Gastrocnemius medialis (tissue), 4 donors: ENCODE measurements at regions of chr19 and their contacts with region 1.

Region 1: GRCh38 chr19:40598121-40598917 is 2.9 kb upstream of the LTBP4 start:
- DNase-seq: peak; percentile 61 to 76
- ATAC-seq: peak; percentile 69 to 82
- H3K4me3 ChIP-seq: no peak overlapping the region
- H3K27ac ChIP-seq: no peak overlapping the region
- H3K4me1 ChIP-seq: peaks cover 24 to 34% of the 10 kb centered on the region in 2 donors
- H3K27me3 ChIP-seq: peaks cover 40 to 54% (median 42%) of the 10 kb centered on the region in 3 donors
- CTCF ChIP-seq: peak; percentile 90 to 99 (median 94)
- POLR2A ChIP-seq: no peak

Region 2: DNA sequence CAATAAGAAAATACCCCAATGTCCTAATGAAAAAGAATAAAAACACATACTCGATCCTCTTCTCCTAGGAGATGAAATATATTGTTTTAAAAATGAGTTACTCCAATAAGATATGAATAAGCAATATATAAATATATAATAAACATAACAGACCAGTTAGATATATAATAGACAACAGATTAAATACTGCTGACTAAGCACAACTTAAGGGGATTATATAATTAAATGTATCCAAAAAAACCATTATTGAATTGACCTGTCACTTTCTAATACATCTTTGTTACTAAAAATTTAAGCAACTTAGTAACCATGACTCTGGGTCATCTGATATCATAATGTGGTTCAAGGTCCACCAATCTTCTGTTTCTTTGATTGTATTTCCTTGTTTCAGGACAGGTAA is 528.3 kb before region 1 on chr19:
- in situ Hi-C with region 1: no loop called
- intact Hi-C with region 1: no loop called
- DNase-seq: no peak
- ATAC-seq: no peak
- H3K4me3 ChIP-seq: no peak overlapping the region
- H3K27ac ChIP-seq: no peak overlapping the region
- H3K4me1 ChIP-seq: no peaks in the 10 kb centered on the region
- H3K27me3 ChIP-seq: no peaks in the 10 kb centered on the region
- CTCF ChIP-seq: no peak
- POLR2A ChIP-seq: no peak

Region 3: DNA sequence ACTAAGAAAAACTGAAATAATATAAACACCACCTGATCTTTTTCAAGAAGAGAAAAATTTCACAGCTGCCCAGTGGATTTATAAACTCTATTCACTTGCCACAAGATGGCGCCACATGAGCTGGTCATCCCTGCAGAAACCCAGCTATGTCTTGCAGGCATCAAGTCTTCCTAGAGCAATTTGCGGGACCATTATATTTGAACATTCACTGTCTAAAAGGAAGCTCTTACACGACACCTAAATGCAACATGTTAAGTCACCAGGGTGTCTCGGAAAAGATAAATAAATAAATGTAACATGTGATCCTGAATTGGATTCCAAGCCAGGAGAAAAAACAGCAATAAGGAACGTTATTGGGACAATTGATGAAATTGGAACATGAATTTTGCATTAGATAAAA is 292.9 kb before region 1 on chr19:
- in situ Hi-C with region 1: no loop called
- intact Hi-C with region 1: loop called (anchors 2 kb)
- DNase-seq: peak; percentile 64 to 66
- ATAC-seq: peak; percentile 85 to 89
- H3K4me3 ChIP-seq: no peak overlapping the region
- H3K27ac ChIP-seq: no peak overlapping the region
- H3K4me1 ChIP-seq: no peaks in the 10 kb centered on the region
- H3K27me3 ChIP-seq: no peaks in the 10 kb centered on the region
- CTCF ChIP-seq: peak; percentile 52 to 80 (median 73)
- POLR2A ChIP-seq: no peak

Region 4: GRCh38 chr19:40529093-40529954 is 69.0 kb before region 1 on chr19:
- in situ Hi-C with region 1: loop called in 2 of 4 experiments (anchors 10 kb)
- intact Hi-C with region 1: loop called (anchors 1 kb)
- DNase-seq: peak; percentile 50 to 71
- ATAC-seq: peak; percentile 89 to 91
- H3K4me3 ChIP-seq: peak overlapping the region; percentile 59 to 69 (median 60)
- H3K27ac ChIP-seq: peak overlapping the region in 1 of 4 donors; percentile 27
- H3K4me1 ChIP-seq: peaks cover 0 to 4% of the 10 kb centered on the region in 2 donors
- H3K27me3 ChIP-seq: no peaks in the 10 kb centered on the region
- CTCF ChIP-seq: peak; percentile 93 to 98 (median 95)
- POLR2A ChIP-seq: no peak

Region 5: GRCh38 chr19:40549007-40549708 is 49.2 kb before region 1 on chr19:
- in situ Hi-C with region 1: no loop called
- intact Hi-C with region 1: loop called (anchors 1 kb)
- DNase-seq: no peak
- ATAC-seq: no peak
- H3K4me3 ChIP-seq: no peak overlapping the region
- H3K27ac ChIP-seq: no peak overlapping the region
- H3K4me1 ChIP-seq: no peaks in the 10 kb centered on the region
- H3K27me3 ChIP-seq: peaks cover 0 to 6% (median 3%) of the 10 kb centered on the region in 3 donors
- CTCF ChIP-seq: peak in 3 of 5 experiments; percentile 27 to 60 (median 54)
- POLR2A ChIP-seq: no peak

Region 6: DNA sequence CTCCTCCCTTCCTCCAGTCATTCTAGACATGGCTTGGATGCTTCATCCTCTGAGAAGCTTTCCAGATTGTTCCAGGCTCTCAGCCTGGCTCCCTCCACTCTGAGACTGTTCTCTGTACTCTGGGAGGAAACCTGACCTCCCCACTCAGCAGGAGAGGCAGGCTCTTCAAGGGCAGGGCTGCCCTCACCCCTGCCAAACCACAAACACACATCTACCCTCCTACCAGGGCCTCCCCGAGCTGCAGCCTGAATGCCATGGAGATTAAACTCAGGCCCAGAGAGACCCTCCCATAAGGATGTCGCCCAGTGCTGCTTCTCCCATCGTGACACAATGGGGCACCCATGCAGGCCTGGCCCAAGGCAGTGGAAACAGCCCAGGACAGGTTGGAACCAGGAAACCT is 76.0 kb after region 1 on chr19:
- in situ Hi-C with region 1: no loop called
- intact Hi-C with region 1: no loop called
- DNase-seq: no peak
- ATAC-seq: peak; percentile 58 to 73
- H3K4me3 ChIP-seq: no peak overlapping the region
- H3K27ac ChIP-seq: no peak overlapping the region
- H3K4me1 ChIP-seq: peaks cover 0 to 4% of the 10 kb centered on the region in 2 donors
- H3K27me3 ChIP-seq: no peaks in the 10 kb centered on the region
- CTCF ChIP-seq: no peak
- POLR2A ChIP-seq: no peak